ENCODE measurements at regions of chr10 and their contacts with region 1.

Region 1: DNA sequence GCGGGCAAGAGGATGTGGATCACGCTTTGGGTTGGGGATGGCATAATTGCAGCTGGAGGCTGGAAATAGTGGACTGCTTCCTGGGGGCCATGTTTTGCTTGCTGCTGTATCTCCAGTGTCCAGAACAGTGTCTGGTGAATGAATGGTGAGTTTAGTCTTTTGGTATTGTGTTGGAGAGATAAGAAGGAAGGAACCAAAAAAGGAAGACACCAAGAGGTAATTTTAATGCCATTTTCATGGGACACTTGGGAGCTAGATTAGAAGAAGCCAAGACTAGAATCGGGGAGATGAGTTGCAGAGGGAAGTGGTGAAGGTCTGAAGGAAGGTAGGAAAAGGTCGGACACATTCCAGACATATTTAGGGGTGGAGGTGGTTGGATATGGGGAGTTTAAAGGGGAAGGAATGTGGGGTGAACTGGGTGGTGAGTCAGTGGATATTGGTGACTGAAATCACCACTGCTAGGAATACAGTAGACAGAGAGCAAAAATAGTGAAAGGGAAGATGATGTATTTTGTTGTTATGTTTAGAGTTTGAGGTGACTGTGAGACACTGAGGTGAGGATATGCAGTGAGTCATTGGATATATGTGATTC is 76.7 kb downstream of the CCNY start:
- DNase-seq: no peak
- H3K4me3 Mint-ChIP-seq: no peak overlapping the region
- H3K27ac Mint-ChIP-seq: no peak overlapping the region
- H3K4me1 Mint-ChIP-seq: peaks cover 44% of the 10 kb centered on the region
- H3K27me3 Mint-ChIP-seq: no peaks in the 10 kb centered on the region

Region 2: GRCh38 chr10:35274498-35275060 is 138.4 kb before region 1 on chr10:
- CTCF ChIA-PET with region 1: no interaction called
- POLR2A ChIA-PET with region 1: no interaction called
- intact Hi-C with region 1: no loop called
- DNase-seq: no peak
- H3K4me3 Mint-ChIP-seq: no peak overlapping the region
- H3K27ac Mint-ChIP-seq: no peak overlapping the region
- H3K4me1 Mint-ChIP-seq: peaks cover 6% of the 10 kb centered on the region
- H3K27me3 Mint-ChIP-seq: peaks cover 2% of the 10 kb centered on the region

Region 3: DNA sequence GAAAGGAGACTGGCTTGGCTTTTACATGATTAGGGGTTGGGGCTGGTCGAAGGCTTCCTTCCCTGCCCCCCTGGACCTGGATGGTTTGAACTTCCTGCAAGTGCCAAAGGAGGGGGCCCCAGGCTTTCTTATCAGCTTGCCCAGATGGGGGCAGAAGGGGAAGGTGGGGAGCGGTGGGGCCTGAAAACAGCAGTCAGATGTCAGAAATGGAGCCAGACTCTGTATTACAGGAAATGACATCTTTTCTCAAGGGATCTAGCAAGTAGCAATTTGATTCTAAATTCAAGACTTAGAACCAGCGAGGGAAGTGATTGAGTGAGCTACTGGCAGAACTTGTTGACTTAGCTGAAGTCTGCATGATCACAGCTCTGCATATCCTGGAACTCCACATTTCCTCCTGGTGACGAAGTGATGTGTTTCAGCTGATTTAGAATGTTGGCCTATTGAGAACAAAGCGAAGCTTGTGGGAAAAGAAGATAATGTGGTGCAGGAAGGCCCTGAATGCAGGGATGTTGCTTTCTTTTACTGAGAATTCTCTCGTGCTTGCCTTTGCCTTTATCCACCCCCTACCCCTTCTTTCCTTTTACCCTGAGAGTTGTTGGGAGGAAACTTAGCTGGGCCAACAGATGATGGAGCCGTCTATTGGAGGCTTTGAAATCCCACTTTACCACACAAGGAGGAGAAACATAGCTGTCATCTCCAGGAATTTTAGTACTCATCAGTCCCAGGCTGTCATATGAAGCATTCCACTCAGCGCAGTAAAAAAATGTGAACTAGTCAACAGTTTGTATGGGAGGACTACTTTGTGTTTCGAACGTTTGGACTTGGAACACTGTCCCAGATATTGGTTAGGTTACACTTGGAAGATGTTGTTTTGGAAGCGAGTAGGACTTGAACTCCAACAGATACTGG is 33.5 kb before region 1 on chr10:
- CTCF ChIA-PET with region 1: interaction called, 3 read pairs
- POLR2A ChIA-PET with region 1: no interaction called
- intact Hi-C with region 1: loop called (anchors 5 kb)
- DNase-seq: peak; percentile 19
- H3K4me3 Mint-ChIP-seq: no peak overlapping the region
- H3K27ac Mint-ChIP-seq: no peak overlapping the region
- H3K4me1 Mint-ChIP-seq: peaks cover 68% of the 10 kb centered on the region
- H3K27me3 Mint-ChIP-seq: no peaks in the 10 kb centered on the region

Region 4: GRCh38 chr10:35803046-35803445 is 390.1 kb after region 1 on chr10:
- CTCF ChIA-PET with region 1: no interaction called
- POLR2A ChIA-PET with region 1: no interaction called
- intact Hi-C with region 1: no loop called
- DNase-seq: no peak
- H3K4me3 Mint-ChIP-seq: no peak overlapping the region
- H3K27ac Mint-ChIP-seq: no peak overlapping the region
- H3K4me1 Mint-ChIP-seq: no peaks in the 10 kb centered on the region
- H3K27me3 Mint-ChIP-seq: no peaks in the 10 kb centered on the region

Measured in activated CD4-positive, alpha-beta memory T cell treated with anti-CD3 and anti-CD28 coated beads for 36 hours (primary cell).